Sigmoid colon (tissue), 7 donors: ENCODE measurements at regions of chr13 and their contacts with region 1.

Region 1: GRCh38 chr13:34762312-34762711 is 179.8 kb upstream of the NBEA start:
- DNase-seq: no peak
- H3K4me3 ChIP-seq: no peak overlapping the region
- H3K27ac ChIP-seq: peak overlapping the region in 3 of 4 donors; percentile 66 to 83 (median 67)
- H3K4me1 ChIP-seq: peaks cover 0 to 24% (median 10%) of the 10 kb centered on the region in 4 donors
- H3K27me3 ChIP-seq: no peaks in the 10 kb centered on the region
- CTCF ChIP-seq: no peak
- EP300 ChIP-seq: peak in 3 of 4 donors; percentile 57 to 79 (median 60)
- POLR2A ChIP-seq: no peak

Region 2: GRCh38 chr13:34816245-34816884 is 54.1 kb after region 1 on chr13:
- intact Hi-C with region 1: loop called (anchors 5 kb)
- DNase-seq: no peak
- H3K4me3 ChIP-seq: no peak overlapping the region
- H3K27ac ChIP-seq: peak overlapping the region; percentile 5 to 75 (median 38)
- H3K4me1 ChIP-seq: peaks cover 0 to 22% (median 19%) of the 10 kb centered on the region in 4 donors
- H3K27me3 ChIP-seq: no peaks in the 10 kb centered on the region
- CTCF ChIP-seq: no peak
- EP300 ChIP-seq: no peak
- POLR2A ChIP-seq: no peak

Region 3: DNA sequence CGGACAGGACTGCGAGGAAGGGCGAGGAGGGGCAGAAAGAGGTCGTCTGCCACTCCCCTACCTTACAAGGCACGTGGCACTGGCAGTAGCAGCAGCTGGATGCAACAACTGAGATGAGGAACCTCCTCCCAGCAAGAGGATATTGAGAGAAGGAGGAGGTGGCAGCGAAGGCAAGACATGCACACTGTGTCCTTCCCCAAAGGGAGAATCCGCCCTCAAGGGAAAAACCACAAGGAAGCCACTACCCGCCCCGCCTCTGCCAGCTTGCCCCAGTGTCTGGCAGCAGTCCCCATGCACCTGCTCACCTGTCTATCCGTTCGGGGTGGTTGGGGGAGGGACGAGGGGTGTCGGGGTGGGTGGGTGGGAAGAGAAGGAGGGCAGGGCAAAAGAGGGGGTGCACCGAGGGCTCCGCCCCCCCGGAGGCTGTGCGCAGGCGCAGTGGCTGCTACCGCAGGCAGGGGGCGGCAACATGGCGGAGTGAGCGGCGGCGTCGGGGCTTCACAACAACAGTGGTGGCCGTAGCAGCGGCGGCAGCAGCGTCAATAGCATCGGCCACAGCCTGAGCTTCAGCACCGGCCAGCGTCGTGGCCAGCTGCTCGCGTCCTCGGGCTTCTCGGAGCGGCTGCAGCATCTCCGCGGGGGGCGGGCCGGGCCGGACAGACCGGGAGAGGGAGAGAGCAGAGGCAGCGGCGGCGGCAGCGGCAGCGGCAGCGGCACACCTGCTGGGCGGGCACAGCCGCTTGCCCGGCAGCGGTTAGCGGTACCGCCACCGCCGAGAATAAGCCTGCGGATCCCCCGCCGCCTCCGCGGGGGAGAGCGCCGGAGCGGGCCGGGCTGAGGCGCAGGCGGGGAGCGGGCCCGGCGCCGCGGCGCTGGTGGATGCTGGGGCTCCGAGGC is 179.8 kb after region 1 on chr13 and contains the start of gene NBEA:
- intact Hi-C with region 1: loop called (anchors 5 kb)
- DNase-seq: peak; percentile 85
- H3K4me3 ChIP-seq: peak within 1 kb of the TSS; percentile 90 to 97 (median 90)
- H3K27ac ChIP-seq: peak within 1 kb of the TSS; percentile 85 to 95 (median 90)
- H3K4me1 ChIP-seq: peaks cover 0 to 41% (median 9%) of the 10 kb centered on the region in 4 donors
- H3K27me3 ChIP-seq: no peaks in the 10 kb centered on the region
- CTCF ChIP-seq: peak in 3 of 4 experiments; percentile 12 to 44 (median 37)
- EP300 ChIP-seq: no peak
- POLR2A ChIP-seq: peak in 1 of 2 donors; percentile 24
- total RNA-seq, gene NBEA: 38.0 to 47.6 (median 43.3) TPM